ENCODE measurements at regions of chr3 and their contacts with region 1.

Region 1: GRCh38 chr3:189270248-189270832 is 98.6 kb downstream of the TPRG1 start:
- DNase-seq: peak; percentile 50
- ATAC-seq: peak; percentile 34
- H3K4me3 Mint-ChIP-seq: no peak overlapping the region
- H3K27ac Mint-ChIP-seq: no peak overlapping the region
- H3K4me1 Mint-ChIP-seq: peaks cover 11% of the 10 kb centered on the region
- H3K27me3 Mint-ChIP-seq: no peaks in the 10 kb centered on the region
- CTCF ChIP-seq: peak; percentile 35

Region 2: GRCh38 chr3:189282189-189282588 is 11.8 kb after region 1 on chr3:
- CTCF ChIA-PET with region 1: interaction called, 13 read pairs
- POLR2A ChIA-PET with region 1: interaction called, 3 read pairs
- intact Hi-C with region 1: no loop called
- DNase-seq: no peak
- ATAC-seq: no peak
- H3K4me3 Mint-ChIP-seq: no peak overlapping the region
- H3K27ac Mint-ChIP-seq: no peak overlapping the region
- H3K4me1 Mint-ChIP-seq: peaks cover 26% of the 10 kb centered on the region
- H3K27me3 Mint-ChIP-seq: no peaks in the 10 kb centered on the region
- CTCF ChIP-seq: no peak

Region 3: GRCh38 chr3:189288348-189289235 is 18.3 kb after region 1 on chr3:
- CTCF ChIA-PET with region 1: interaction called, 17 read pairs
- POLR2A ChIA-PET with region 1: no interaction called
- intact Hi-C with region 1: no loop called
- DNase-seq: no peak
- ATAC-seq: peak; percentile 79
- H3K4me3 Mint-ChIP-seq: no peak overlapping the region
- H3K27ac Mint-ChIP-seq: peak overlapping the region; percentile 0
- H3K4me1 Mint-ChIP-seq: peaks cover 33% of the 10 kb centered on the region
- H3K27me3 Mint-ChIP-seq: no peaks in the 10 kb centered on the region
- CTCF ChIP-seq: no peak

Region 4: DNA sequence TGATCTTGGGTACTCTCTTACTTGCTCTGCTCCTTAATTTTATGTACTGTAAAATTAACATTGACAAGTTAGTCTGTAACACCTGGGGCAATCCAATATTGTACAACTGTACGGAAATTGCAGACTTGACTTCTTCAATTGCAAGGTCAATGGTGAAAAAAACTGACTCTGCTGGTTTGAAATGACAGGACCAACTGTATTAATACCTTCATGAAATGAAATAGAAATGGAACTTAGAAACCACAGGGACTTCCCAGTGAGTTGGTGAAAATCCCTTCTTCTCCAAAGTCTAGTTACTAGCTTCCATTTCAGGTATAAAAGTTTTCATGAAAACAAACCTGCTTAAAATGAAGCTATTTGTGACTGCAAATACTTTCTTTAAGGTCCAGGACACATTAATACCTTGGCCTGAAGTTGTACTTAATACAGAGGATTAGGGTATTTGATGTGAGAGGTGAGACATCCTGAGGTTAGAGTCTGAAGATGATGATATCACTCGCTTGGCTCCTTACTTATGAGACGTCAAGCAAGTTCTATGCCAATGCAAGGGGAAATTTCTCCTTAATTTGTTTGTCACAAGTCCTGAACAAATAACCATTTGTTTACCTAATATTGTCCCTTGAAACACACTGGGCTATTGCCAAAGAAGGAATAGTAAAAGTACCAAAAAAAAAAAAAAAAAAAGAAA is 134.6 kb after region 1 on chr3:
- CTCF ChIA-PET with region 1: interaction called, 3 read pairs
- POLR2A ChIA-PET with region 1: no interaction called
- intact Hi-C with region 1: loop called (anchors 10 kb)
- DNase-seq: no peak
- ATAC-seq: no peak
- H3K4me3 Mint-ChIP-seq: no peak overlapping the region
- H3K27ac Mint-ChIP-seq: no peak overlapping the region
- H3K4me1 Mint-ChIP-seq: peaks cover 10% of the 10 kb centered on the region
- H3K27me3 Mint-ChIP-seq: no peaks in the 10 kb centered on the region
- CTCF ChIP-seq: no peak

Region 5: DNA sequence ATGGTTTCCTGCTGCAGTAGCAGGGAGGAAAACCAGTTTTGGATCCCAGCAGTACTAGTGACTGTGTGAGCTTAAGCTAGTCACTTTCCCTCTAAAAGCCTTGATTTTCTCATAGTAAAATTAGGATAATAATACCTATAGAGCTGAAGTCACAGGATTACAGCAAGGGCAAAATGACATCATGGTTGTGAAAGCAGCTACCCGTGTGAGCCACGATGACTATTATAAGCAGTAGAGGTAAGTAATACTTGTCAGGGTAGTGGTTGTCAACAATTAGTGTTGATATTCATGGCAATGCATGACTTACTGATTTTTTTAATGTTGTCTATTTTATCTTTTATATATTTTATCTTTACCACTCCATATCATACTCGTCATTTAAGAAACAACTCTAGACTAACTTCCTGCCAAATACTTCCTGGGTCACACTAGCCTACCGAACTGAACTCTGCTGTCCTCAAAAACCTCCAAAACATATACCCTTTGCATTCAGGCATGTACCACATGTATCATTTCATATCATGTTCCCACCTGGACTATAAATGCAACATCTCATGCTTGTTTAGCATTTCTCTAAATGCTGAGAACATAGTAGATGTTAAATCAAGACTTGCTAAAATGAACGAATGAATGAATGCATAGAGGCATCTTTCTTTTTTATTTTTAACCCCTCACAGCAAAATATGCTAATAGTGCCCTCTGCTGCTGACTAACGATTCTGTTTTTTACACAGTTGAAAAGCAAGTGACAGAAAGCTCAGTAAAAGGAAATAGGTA is 677.8 kb after region 1 on chr3:
- CTCF ChIA-PET with region 1: interaction called, 22 read pairs
- POLR2A ChIA-PET with region 1: no interaction called
- intact Hi-C with region 1: loop called (anchors 5 kb)
- DNase-seq: peak; percentile 15
- ATAC-seq: peak; percentile 37
- H3K4me3 Mint-ChIP-seq: no peak overlapping the region
- H3K27ac Mint-ChIP-seq: no peak overlapping the region
- H3K4me1 Mint-ChIP-seq: peaks cover 3% of the 10 kb centered on the region
- H3K27me3 Mint-ChIP-seq: peaks cover 4% of the 10 kb centered on the region
- CTCF ChIP-seq: peak; percentile 64